ENCODE measurements at regions of chr15 and their contacts with region 1.

Region 1: DNA sequence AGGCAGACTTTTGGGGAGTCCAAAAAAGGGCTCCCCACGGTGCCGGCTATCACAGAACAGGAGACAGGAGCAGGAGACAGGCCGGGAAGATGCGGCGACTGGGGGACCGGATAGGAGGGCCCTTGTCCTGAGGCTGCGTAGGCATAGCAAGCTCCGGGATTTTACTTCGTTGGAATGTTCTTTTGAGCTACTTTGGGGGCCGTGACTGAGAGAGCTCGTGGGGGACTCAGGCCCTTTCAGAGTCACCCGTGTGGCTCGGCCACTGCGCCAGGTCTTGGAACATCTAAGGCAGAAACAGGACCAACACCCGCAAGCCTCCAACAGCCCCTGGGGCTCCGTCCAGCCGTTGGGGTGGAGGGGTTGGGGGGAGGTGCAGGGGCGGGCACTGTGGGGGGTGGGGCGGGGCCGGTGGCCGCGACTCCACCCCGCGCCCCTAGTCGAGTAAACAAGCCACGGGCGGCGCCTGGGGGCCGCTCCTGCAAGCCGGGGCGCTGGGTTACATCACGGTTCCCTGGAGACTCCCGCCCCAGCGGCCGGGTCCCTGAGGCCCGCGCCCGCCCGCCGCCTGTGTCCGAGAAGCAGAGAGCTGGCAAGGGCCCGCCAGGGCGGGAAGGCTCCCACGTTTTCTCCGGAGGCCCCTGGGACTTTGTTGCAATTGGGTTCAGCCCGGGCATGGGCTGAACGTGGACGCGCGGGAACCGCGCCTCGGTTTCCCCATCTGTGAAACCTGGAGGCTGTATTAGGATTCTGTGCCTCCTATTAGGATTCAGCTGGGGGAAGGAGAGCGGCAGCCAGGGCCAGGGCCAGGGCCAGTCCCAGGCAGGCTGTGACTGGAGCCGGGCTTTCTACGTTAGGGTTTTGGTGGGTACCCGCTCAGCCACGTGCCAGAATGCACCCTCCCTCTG is 23.3 kb upstream of the C15orf39 start:
- DNase-seq: peak in 1 of 2 experiments; percentile 72
- H3K4me3 ChIP-seq: peak overlapping the region; percentile 12 to 57 (median 24); a peak in 6 of 8 replicates
- H3K27ac ChIP-seq: no peak overlapping the region
- H3K4me1 ChIP-seq: peaks cover 4 to 25% (median 19%) of the 10 kb centered on the region in 4 experiments
- H3K27me3 ChIP-seq: peaks cover 0 to 16% (median 7%) of the 10 kb centered on the region in 4 experiments; a peak in 4 of 7 replicates
- CTCF ChIP-seq: no peak; a peak in 1 of 4 replicates
- EP300 ChIP-seq: no peak
- POLR2A ChIP-seq: no peak
- RAD21 ChIP-seq: 0 out of 4 replicates have a peak, but pooled peaks of 1 of the 2 experiments have one; percentile 1

Region 2: GRCh38 chr15:75036314-75036649 is 142.1 kb before region 1 on chr15:
- CTCF ChIA-PET with region 1: interaction called, 12 read pairs
- POLR2A ChIA-PET with region 1: interaction called, 4 read pairs
- DNase-seq: peak; percentile 64 to 71
- H3K4me3 ChIP-seq: no peak overlapping the region
- H3K27ac ChIP-seq: no peak overlapping the region
- H3K4me1 ChIP-seq: peaks cover 3 to 7% (median 3%) of the 10 kb centered on the region in 4 experiments; a peak in 6 of 7 replicates
- H3K27me3 ChIP-seq: no peaks in the 10 kb centered on the region
- CTCF ChIP-seq: no peak
- EP300 ChIP-seq: peak in 1 of 2 experiments; percentile 60; a peak in 1 of 3 replicates
- POLR2A ChIP-seq: no peak
- RAD21 ChIP-seq: peak in 1 of 2 experiments; percentile 25; a peak in 2 of 4 replicates

Region 3: DNA sequence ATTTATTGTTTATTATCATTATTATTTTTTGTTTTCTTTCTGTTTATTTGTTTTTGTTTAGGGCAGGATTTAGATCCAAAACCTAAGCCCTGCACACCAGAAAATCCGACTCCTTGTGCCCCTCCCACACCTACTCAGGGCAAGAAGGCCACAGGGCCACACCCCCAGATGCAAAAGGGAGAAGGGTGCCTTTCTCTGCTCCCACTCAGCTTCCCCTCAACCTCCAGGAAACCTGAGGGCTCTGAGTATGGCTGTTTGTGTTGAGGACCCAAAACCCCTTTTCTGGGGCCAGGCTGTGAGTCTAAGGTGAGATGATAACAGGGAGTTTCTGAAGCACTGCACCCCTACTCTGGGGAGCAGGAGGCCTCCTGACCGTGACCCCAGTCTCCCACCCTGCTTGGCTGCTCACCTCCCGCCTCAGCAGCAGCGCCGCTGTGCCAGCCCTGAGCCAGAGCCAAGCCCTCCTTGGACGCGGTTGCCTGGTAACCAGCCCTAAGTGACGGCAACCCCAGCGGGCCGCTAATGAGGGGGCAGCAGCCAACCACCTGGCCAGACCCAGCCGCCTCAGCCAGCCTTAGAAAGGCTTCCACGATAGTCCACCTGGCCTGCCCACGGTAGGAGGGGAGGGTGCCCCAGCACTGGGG is 16.8 kb after region 1 on chr15:
- CTCF ChIA-PET with region 1: interaction called, 13 read pairs
- POLR2A ChIA-PET with region 1: interaction called, 13 read pairs
- DNase-seq: peak in 1 of 2 experiments; percentile 87
- H3K4me3 ChIP-seq: peak overlapping the region in 3 of 4 experiments; percentile 20 to 53 (median 24); a peak in 4 of 8 replicates
- H3K27ac ChIP-seq: no peak overlapping the region; the same call in 1 of the 2 replicates
- H3K4me1 ChIP-seq: peaks cover 3 to 33% (median 17%) of the 10 kb centered on the region in 4 experiments
- H3K27me3 ChIP-seq: no peaks in the 10 kb centered on the region
- CTCF ChIP-seq: no peak
- EP300 ChIP-seq: no peak
- POLR2A ChIP-seq: no peak
- RAD21 ChIP-seq: no peak; a peak in 1 of 4 replicates

Region 4: DNA sequence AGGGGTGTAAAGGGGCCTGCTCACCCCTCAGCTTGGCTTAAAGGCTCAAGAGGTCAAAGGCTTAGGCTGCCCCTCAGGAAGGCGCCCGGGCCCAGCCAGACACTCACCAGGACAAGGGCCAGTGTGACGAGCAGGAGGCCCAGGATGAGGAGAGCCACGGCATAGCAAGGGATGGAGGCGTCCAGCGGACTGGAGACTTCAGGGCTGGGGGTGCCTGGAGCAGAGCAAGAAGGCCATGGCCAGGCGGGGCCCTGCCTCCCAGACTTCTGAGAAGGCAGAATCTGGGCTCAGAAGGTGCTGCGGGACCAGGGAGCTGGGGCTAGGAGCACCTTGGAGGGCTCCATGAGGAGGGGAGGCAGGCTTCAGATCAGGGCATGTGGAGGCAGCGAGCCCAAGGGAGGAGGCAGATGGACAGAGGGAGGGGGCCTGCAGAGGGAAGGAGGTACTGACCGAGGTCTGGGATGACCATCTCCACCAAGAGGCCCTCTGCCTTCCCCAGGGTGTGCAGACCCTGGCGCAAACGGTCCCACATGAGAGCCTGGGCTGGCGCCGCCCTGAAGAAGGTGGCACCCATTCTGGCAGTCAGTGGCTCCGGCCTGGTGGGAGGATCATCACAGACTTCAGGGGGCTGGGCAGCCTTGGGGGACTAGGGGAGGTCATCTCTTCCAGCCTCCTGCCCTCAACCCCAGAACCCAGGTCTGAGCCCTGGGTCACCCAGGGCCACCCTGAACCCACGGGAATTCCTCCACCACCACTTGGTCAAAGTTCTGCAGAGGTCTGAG is 47.7 kb after region 1 on chr15:
- CTCF ChIA-PET with region 1: no interaction called
- POLR2A ChIA-PET with region 1: no interaction called
- DNase-seq: no peak
- H3K4me3 ChIP-seq: no peak overlapping the region
- H3K27ac ChIP-seq: no peak overlapping the region
- H3K4me1 ChIP-seq: no peaks in the 10 kb centered on the region; a peak in 2 of 7 replicates
- H3K27me3 ChIP-seq: no peaks in the 10 kb centered on the region; a peak in 1 of 7 replicates
- CTCF ChIP-seq: no peak
- EP300 ChIP-seq: no peak
- POLR2A ChIP-seq: no peak
- RAD21 ChIP-seq: no peak

Measured in H1 (cell line).